A673 (cell line): ENCODE measurements at regions of chr1 and their contacts with region 1.

Region 1: GRCh38 chr1:215992620-215993019 is 425.5 kb downstream of the KCTD3 start:
- DNase-seq: peak; percentile 58
- H3K4me3 ChIP-seq: no peak overlapping the region
- H3K27ac ChIP-seq: no peak overlapping the region
- H3K4me1 ChIP-seq: no peaks in the 10 kb centered on the region
- H3K27me3 ChIP-seq: peaks cover 30% of the 10 kb centered on the region
- CTCF ChIP-seq: peak; percentile 62

Region 2: DNA sequence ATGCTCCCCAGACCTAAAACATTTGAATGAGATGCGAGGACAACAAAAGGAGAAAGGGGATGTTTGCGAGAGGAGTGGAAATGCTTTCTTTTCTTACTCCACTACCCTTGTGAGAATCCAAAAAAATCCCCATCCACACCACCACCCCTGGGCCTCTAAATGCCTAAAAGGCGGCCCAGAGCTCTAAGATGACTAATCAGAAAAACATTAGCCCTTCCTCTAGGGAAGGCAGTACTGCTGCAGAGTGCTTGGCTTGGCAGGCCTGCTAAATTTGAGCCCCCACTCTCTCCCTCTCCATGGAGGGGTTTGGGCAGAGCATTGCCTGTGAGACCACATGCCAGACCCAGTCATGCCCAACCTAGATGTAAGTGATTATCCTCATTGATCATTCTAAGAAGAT is 82.7 kb after region 1 on chr1:
- CTCF ChIA-PET with region 1: no interaction called
- POLR2A ChIA-PET with region 1: no interaction called
- intact Hi-C with region 1: no loop called
- DNase-seq: no peak
- H3K4me3 ChIP-seq: no peak overlapping the region
- H3K27ac ChIP-seq: no peak overlapping the region
- H3K4me1 ChIP-seq: no peaks in the 10 kb centered on the region
- H3K27me3 ChIP-seq: peaks cover 9% of the 10 kb centered on the region
- CTCF ChIP-seq: no peak

Region 3: DNA sequence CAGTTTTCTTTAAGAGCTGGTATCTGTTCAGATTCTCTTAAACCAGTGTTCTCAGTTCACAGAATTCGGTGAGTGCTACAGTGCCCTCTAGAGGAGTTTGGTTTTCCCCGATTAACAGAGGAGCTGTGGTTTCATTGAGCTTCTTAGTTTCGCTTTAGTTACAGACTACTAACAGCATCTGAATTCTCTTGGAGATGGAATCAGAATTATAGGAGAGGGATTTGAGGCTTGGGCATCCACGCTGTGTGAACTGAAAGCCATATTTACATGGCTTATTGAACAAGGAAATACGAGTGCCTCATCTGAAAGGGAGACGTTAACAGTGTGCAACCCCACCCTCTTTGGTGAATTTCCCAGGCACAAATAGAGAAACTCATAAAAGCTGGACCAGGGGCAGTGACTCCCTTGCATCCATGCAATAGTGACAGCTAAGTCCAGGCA is 228.7 kb after region 1 on chr1:
- CTCF ChIA-PET with region 1: interaction called, 3 read pairs
- POLR2A ChIA-PET with region 1: no interaction called
- intact Hi-C with region 1: loop called (anchors 1 kb)
- DNase-seq: peak; percentile 84
- H3K4me3 ChIP-seq: peak overlapping the region; percentile 37
- H3K27ac ChIP-seq: no peak overlapping the region
- H3K4me1 ChIP-seq: no peaks in the 10 kb centered on the region
- H3K27me3 ChIP-seq: peaks cover 55% of the 10 kb centered on the region
- CTCF ChIP-seq: peak; percentile 85

Region 4: GRCh38 chr1:216310776-216311175 is 318.2 kb after region 1 on chr1:
- CTCF ChIA-PET with region 1: no interaction called
- POLR2A ChIA-PET with region 1: no interaction called
- intact Hi-C with region 1: no loop called
- DNase-seq: peak; percentile 81
- H3K4me3 ChIP-seq: no peak overlapping the region
- H3K27ac ChIP-seq: no peak overlapping the region
- H3K4me1 ChIP-seq: no peaks in the 10 kb centered on the region
- H3K27me3 ChIP-seq: peaks cover 9% of the 10 kb centered on the region
- CTCF ChIP-seq: peak; percentile 74

Region 5: DNA sequence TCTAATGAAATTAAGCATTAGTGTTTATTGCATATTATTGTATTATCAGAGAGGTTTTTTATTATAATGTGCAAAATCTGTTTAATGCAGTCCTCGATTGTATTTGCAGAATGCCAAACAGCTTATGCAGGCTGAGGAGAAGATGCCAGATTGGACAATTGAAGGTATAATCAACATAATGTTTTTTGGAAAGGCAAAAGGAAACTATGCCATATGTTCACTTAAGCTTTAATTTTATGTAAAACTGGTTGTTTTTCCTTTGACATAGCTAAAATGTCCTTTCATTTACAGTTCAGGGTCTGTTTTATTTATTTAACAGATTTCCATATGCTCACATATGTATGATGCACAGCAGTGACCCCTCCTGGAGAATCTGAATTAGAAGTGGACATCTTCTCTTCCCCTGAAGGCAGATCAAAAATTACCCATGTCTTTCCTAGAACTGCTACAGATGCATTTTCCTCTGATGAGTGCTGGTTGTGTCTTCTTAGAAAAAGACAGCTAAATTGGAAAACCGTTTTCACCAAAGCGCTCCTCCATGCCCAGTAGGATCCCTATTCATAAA is 574.1 kb after region 1 on chr1:
- CTCF ChIA-PET with region 1: no interaction called
- POLR2A ChIA-PET with region 1: no interaction called
- intact Hi-C with region 1: loop called (anchors 10 kb)
- DNase-seq: peak; percentile 41
- H3K4me3 ChIP-seq: no peak overlapping the region
- H3K27ac ChIP-seq: no peak overlapping the region
- H3K4me1 ChIP-seq: no peaks in the 10 kb centered on the region
- H3K27me3 ChIP-seq: peaks cover 66% of the 10 kb centered on the region
- CTCF ChIP-seq: peak; percentile 56

Region 6: GRCh38 chr1:216742625-216743024 is 750.0 kb after region 1 on chr1:
- CTCF ChIA-PET with region 1: no interaction called
- POLR2A ChIA-PET with region 1: no interaction called
- intact Hi-C with region 1: loop called (anchors 10 kb)
- DNase-seq: no peak
- H3K4me3 ChIP-seq: no peak overlapping the region
- H3K27ac ChIP-seq: no peak overlapping the region
- H3K4me1 ChIP-seq: no peaks in the 10 kb centered on the region
- H3K27me3 ChIP-seq: peaks cover 17% of the 10 kb centered on the region
- CTCF ChIP-seq: peak; percentile 41; the same call in 1 of the 2 replicates

Region 7: DNA sequence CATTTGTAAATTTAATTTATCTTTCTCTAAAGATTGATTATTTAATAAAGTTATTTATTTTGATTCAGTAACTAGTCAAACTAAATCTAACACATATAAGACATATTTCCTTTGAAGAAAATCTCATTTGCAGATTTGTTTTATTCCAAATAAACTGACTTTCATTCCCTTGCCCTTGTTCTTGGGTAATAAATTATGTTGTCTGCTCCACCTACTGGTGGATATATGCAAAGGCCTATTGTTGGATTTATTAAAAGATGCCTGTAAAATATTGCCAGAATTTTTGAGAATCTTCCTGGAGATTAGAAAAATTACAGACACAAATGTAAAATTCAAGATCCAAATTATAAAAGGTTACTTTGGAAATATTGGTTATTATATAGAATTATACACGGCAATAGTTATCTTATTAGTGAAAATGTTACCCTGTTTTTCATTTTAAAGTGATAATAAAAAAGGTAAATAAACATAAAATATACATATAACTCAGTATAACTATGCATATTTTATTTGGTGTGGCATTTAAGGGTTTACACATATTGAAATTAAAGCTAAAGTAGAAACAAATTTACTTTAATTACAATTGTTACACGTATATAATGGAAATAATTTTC is 1754.6 kb after region 1 on chr1:
- CTCF ChIA-PET with region 1: no interaction called
- POLR2A ChIA-PET with region 1: no interaction called
- intact Hi-C with region 1: loop called (anchors 10 kb)
- DNase-seq: peak; percentile 46
- H3K4me3 ChIP-seq: no peak overlapping the region
- H3K27ac ChIP-seq: no peak overlapping the region
- H3K4me1 ChIP-seq: no peaks in the 10 kb centered on the region
- H3K27me3 ChIP-seq: no peaks in the 10 kb centered on the region
- CTCF ChIP-seq: peak; percentile 83